Gastrocnemius medialis (tissue), 4 donors: ENCODE measurements at regions of chr10 and their contacts with region 1.

Region 1: DNA sequence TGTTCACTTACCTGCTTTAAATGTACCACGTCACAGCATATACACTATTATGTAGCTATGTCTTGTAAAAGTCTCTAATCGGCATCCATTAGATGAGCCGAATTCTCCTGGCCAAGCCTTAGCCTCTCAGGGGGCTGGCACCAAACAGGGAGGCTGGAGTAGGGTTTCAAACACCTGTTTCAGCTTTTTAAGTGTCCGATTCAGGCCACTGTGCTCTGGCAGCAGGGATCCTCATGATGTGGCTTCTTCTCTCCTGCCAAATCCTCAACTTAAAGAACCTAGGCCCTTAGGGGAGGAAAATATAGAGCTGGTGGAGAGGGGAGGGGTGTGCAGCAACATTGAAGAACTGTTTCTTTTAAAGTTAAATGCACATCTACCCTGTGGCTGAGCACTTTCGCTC is 68.5 kb upstream of the NFKB2 start:
- DNase-seq: peak; percentile 78 to 88
- ATAC-seq: peak; percentile 94 to 96
- H3K4me3 ChIP-seq: peak overlapping the region in 1 of 4 donors; percentile 15
- H3K27ac ChIP-seq: peak overlapping the region; percentile 82 to 92 (median 88)
- H3K4me1 ChIP-seq: peaks cover 49 to 66% of the 10 kb centered on the region in 2 donors
- H3K27me3 ChIP-seq: no peaks in the 10 kb centered on the region
- CTCF ChIP-seq: no peak
- POLR2A ChIP-seq: no peak

Region 2: DNA sequence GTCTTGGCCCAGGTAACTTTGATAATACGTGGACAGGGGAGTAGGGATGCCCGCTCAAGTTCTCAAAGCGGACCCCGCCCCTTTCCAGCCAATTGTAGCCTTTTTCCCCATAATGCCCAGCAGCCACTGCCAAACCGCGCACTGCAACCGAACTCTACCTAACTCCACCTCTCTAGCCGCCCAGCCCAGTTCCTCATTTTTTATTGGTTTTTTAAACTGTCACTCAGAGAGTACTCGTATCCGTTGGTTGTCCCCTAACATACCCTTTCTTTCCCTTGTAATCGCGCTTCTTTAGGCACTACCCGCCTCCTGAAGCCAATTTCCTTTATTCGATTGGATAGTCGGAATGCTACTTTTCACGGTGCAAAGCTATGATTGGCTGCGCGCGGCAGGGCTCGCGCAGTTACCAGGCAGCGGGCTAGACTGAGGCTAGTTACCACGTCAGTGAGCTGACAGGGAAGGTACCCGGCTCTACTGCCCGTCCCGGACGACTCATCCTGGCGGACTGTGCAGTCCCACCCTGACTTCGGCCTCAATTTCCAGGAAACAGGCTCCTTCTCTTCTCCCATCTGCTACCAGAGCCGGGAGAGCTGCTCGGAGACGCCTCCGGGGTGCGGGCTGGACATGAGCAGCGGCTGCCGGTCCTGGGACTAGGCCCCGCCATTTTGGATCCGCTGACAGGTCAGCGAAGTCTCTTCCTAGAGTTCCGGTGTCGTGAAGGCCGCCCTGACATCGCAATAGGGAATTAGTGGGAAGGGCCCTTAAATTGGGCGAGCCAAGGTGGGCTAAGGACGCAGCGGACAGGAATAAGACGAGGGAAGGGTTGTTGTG is 81.7 kb before region 1 on chr10 and contains the start of gene GBF1:
- in situ Hi-C with region 1: no loop called
- intact Hi-C with region 1: loop called (anchors 5 kb)
- DNase-seq: peak; percentile 92 to 96
- ATAC-seq: peak; percentile 83 to 87
- H3K4me3 ChIP-seq: peak within 1 kb of the TSS; percentile 74 to 96 (median 86)
- H3K27ac ChIP-seq: peak within 1 kb of the TSS; percentile 91 to 98 (median 93)
- H3K4me1 ChIP-seq: peaks cover 50 to 51% of the 10 kb centered on the region in 2 donors
- H3K27me3 ChIP-seq: no peaks in the 10 kb centered on the region
- CTCF ChIP-seq: no peak
- POLR2A ChIP-seq: peak; percentile 100
- total RNA-seq, gene GBF1: 31.4 to 64.2 (median 58.7) TPM

Region 3: GRCh38 chr10:102280397-102281101 is 46.5 kb before region 1 on chr10:
- in situ Hi-C with region 1: no loop called
- intact Hi-C with region 1: loop called (anchors 5 kb)
- DNase-seq: peak; percentile 85 to 92
- ATAC-seq: peak; percentile 98
- H3K4me3 ChIP-seq: peak overlapping the region; percentile 37 to 54 (median 40)
- H3K27ac ChIP-seq: peak overlapping the region; percentile 85 to 94 (median 88)
- H3K4me1 ChIP-seq: peaks cover 70 to 71% of the 10 kb centered on the region in 2 donors
- H3K27me3 ChIP-seq: no peaks in the 10 kb centered on the region
- CTCF ChIP-seq: no peak
- POLR2A ChIP-seq: peak; percentile 48 to 78